ENCODE measurements at regions of chr3 and their contacts with region 1.

Region 1: DNA sequence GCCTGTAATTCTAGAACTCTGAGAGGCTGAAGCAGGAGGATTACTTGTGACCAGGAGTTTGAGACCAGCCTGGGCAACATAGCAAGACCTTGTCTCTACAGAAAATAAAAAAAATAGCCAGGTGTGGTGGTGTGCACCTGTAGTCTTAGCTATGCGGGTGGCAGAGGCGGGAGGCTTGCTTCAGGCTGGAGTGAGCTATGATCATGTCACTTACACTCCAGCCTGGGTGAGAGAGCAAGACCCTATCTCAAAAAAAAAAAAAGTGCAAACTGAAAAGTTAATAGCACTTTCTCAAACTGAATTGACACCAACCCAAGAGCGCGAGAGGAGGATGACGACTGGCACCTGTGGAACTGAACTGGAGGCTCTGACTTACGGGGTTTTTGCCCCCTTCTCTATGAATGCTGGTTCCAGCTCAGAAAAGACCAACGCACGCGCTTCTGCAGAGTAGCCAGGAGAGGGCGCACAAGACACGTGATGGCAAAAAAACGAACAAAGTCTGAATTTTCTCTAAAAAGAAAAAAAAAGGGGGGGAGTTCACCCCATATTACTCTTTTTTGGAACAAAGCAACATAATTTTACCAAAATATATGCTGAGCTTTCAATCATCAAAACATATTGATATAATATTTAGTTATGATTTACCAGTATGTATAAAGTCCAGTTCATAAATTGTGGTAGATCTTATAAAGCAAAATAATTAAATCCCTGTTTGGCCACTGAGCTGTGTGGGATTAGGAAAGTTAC is 23.7 kb downstream of the CFAP92 start:
- DNase-seq: no peak
- H3K4me3 ChIP-seq: no peak overlapping the region
- H3K27ac ChIP-seq: peak overlapping the region in 2 of 4 donors; percentile 66 to 69
- H3K4me1 ChIP-seq: peaks cover 0 to 35% (median 25%) of the 10 kb centered on the region in 4 donors
- H3K27me3 ChIP-seq: no peaks in the 10 kb centered on the region
- CTCF ChIP-seq: peak; percentile 91 to 94 (median 93)
- EP300 ChIP-seq: no peak
- POLR2A ChIP-seq: no peak

Region 2: GRCh38 chr3:128841926-128842920 is 127.9 kb before region 1 on chr3:
- intact Hi-C with region 1: no loop called
- DNase-seq: no peak
- H3K4me3 ChIP-seq: no peak overlapping the region
- H3K27ac ChIP-seq: no peak overlapping the region
- H3K4me1 ChIP-seq: peaks cover 14 to 20% (median 16%) of the 10 kb centered on the region in 4 donors
- H3K27me3 ChIP-seq: no peaks in the 10 kb centered on the region
- CTCF ChIP-seq: no peak
- EP300 ChIP-seq: no peak
- POLR2A ChIP-seq: no peak

Region 3: GRCh38 chr3:129052675-129053074 is 82.5 kb after region 1 on chr3:
- intact Hi-C with region 1: loop called (anchors 5 kb)
- DNase-seq: no peak
- H3K4me3 ChIP-seq: no peak overlapping the region
- H3K27ac ChIP-seq: peak overlapping the region; percentile 60 to 76 (median 71)
- H3K4me1 ChIP-seq: peaks cover 20 to 27% (median 26%) of the 10 kb centered on the region in 4 donors
- H3K27me3 ChIP-seq: no peaks in the 10 kb centered on the region
- CTCF ChIP-seq: no peak
- EP300 ChIP-seq: no peak
- POLR2A ChIP-seq: no peak

Region 4: GRCh38 chr3:129087138-129087702 is 117.1 kb after region 1 on chr3:
- intact Hi-C with region 1: loop called (anchors 10 kb)
- DNase-seq: no peak
- H3K4me3 ChIP-seq: no peak overlapping the region
- H3K27ac ChIP-seq: peak overlapping the region; percentile 82 to 88 (median 83)
- H3K4me1 ChIP-seq: peaks cover 6 to 12% (median 11%) of the 10 kb centered on the region in 4 donors
- H3K27me3 ChIP-seq: no peaks in the 10 kb centered on the region
- CTCF ChIP-seq: peak in 1 of 3 experiments; percentile 16
- EP300 ChIP-seq: no peak
- POLR2A ChIP-seq: no peak